Head of caudate nucleus (tissue), 42 donors: ENCODE measurements at regions of chr14 and their contacts with region 1.

Region 1: DNA sequence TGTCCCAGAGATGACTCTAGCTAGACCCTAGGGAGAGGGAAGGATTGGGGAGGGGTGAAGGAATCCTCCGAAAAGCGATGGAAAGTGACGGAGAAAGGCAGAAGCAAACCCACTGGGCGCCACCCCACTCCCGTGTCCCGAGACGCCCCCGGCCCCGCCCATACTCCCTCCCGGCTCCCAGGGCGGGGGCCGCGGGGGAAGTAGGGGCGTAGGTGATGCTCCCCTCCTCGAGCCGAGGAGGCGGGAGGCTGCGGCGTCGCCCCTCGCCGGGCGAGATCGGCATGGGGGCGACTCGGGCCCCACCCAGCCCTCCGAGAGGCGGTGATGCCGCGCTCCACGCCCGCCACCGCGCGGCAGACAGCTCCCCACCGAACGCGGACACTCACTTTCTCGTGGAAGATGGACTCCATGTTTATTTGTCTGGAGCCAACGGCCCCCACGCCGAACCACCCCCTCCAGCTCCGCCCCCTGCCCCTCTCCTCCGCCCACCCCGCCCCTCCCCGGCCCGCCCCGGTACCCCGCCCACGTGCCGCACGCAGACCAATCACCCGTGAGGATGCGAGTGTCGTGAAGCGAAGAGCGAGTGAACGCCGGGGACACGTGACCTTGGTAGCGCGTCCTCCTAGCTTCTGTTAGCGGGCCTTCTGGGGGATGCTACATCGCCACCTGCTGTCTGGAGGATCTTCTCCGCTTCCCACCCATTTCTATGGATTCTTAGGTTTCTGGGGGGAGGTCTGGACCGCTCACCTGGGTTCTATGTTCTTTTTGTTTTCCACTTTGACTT is at the start of gene ATXN3:
- DNase-seq: peak; percentile 96 to 100 (median 99)

Region 2: DNA sequence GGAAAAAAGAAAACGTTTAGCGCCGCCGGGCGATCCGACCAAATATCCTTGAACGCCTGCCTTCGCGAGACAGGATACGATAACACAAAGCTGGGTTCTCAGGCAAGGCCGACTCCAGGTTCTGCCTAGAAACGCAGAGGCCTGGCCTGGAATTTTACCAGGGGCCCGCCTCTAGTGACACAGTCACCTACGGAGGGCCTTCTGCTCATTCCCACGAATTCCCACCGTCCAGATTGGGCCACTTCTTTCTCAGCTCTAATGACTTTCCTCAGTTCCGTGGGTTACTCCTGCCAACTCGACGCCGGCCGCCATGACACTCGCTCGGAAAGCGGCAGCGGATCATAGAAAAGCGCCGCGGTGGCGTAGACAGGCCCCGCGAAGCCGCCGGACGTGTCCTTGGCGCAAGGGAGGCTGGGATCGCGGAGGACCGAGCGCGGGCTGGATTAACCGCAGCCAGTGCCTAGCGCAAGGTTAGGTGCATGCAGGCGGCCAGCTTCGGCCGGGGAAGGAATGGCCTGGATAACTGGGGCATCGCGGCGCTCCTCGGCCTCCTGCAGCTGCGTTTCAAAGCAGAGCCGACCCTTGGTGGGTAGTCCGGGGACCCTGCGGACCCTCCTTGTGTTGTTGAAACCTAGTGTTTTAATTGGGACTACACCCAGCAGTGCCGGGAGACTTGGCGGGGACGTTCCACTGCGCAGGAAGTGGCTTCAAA is 66.5 kb before region 1 on chr14 and contains the start of gene TRIP11:
- intact Hi-C with region 1: loop called (anchors 2 kb)
- DNase-seq: peak; percentile 90 to 99 (median 97)